Left lung (tissue), 14 donors: ENCODE measurements at regions of chr16 and their contacts with region 1.

Region 1: GRCh38 chr16:14529010-14529669 is 100.9 kb downstream of the PARN start:
- DNase-seq: peak in 3 of 4 donors; percentile 58 to 92 (median 85)
- ATAC-seq: peak; percentile 93
- H3K4me3 ChIP-seq: no peak overlapping the region
- H3K27ac ChIP-seq: no peak overlapping the region
- H3K4me1 ChIP-seq: peaks cover 4 to 7% of the 10 kb centered on the region in 2 donors
- H3K27me3 ChIP-seq: no peaks in the 10 kb centered on the region
- CTCF ChIP-seq: peak; percentile 45 to 50

Region 2: GRCh38 chr16:14300705-14301168 is 228.4 kb before region 1 on chr16:
- intact Hi-C with region 1: loop called in 1 of 2 experiments (anchors 5 kb)
- DNase-seq: peak in 3 of 4 donors; percentile 49 to 84 (median 81)
- ATAC-seq: peak; percentile 88
- H3K4me3 ChIP-seq: peak overlapping the region in 1 of 2 donors; percentile 29
- H3K27ac ChIP-seq: no peak overlapping the region
- H3K4me1 ChIP-seq: peaks cover 9 to 27% of the 10 kb centered on the region in 2 donors
- H3K27me3 ChIP-seq: peaks cover 0 to 57% of the 10 kb centered on the region in 2 donors
- CTCF ChIP-seq: peak in 1 of 2 donors; percentile 46

Region 3: DNA sequence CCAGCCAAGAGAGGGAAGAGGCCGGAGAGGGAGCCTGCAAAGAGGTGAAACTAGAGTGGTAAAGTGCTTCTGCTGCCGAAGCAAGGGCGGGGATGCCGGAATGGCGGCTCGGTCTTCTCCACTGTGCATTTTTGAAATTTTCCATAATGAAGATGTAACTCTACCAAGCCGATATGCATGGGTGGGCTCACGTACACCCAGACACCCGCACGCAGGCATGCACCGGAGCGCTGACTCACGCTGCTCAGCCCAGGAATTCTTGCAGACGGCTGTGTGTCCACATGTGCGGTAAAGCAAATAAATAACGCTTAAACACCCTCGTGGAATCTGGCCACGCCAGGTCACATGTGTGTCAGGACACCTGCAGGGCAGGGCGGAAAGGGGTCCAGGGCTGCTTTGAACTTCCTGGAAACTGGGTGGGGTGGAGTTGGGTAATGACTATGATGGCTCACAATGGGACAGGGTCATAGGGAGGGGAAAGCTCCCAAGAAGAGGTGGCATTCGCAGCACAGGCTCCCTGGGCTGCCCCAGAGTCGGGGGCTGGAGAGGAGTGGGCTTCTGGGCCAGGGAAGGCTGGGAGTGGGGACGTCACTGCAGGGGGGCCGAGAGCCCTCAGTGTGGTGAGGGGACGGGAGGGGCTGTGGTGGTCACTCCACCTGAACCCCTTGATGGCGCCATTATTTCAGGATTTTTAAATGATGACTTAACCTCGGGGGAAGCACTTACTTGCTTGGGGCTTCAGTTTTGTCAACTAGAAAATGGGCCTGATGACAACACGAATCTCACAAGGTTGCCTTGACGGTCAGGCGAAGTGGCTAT is 164.5 kb before region 1 on chr16:
- intact Hi-C with region 1: no loop called
- DNase-seq: peak in 2 of 4 donors; percentile 16 to 59
- ATAC-seq: peak; percentile 79
- H3K4me3 ChIP-seq: no peak overlapping the region
- H3K27ac ChIP-seq: peak overlapping the region; percentile 28 to 53
- H3K4me1 ChIP-seq: no peaks in the 10 kb centered on the region
- H3K27me3 ChIP-seq: peaks cover 0 to 2% of the 10 kb centered on the region in 2 donors
- CTCF ChIP-seq: no peak